Calu3 (cell line): ENCODE measurements at regions of chr14 and their contacts with region 1.

Region 1: GRCh38 chr14:56117765-56118610 is at the start of gene PELI2:
- DNase-seq: peak; percentile 85
- H3K4me3 Mint-ChIP-seq: peak within 1 kb of the TSS; percentile 96
- H3K27ac Mint-ChIP-seq: peak within 1 kb of the TSS; percentile 86
- H3K4me1 Mint-ChIP-seq: peaks cover 42% of the 10 kb centered on the region
- H3K27me3 Mint-ChIP-seq: no peaks in the 10 kb centered on the region
- CTCF ChIP-seq: no peak
- total RNA-seq, gene PELI2: 14.7 and 19.5 TPM in 2 replicates

Region 2: GRCh38 chr14:54301359-54301758 is 1816.6 kb before region 1 on chr14:
- CTCF ChIA-PET with region 1: interaction called, 10 read pairs
- intact Hi-C with region 1: no loop called
- DNase-seq: no peak
- H3K4me3 Mint-ChIP-seq: no peak overlapping the region
- H3K27ac Mint-ChIP-seq: no peak overlapping the region
- H3K4me1 Mint-ChIP-seq: no peaks in the 10 kb centered on the region
- H3K27me3 Mint-ChIP-seq: peaks cover 17% of the 10 kb centered on the region
- CTCF ChIP-seq: no peak

Region 3: GRCh38 chr14:55846826-55847446 is 271.1 kb before region 1 on chr14:
- CTCF ChIA-PET with region 1: no interaction called
- intact Hi-C with region 1: loop called (anchors 10 kb)
- DNase-seq: no peak
- H3K4me3 Mint-ChIP-seq: no peak overlapping the region
- H3K27ac Mint-ChIP-seq: no peak overlapping the region
- H3K4me1 Mint-ChIP-seq: peaks cover 63% of the 10 kb centered on the region
- H3K27me3 Mint-ChIP-seq: no peaks in the 10 kb centered on the region
- CTCF ChIP-seq: no peak

Region 4: GRCh38 chr14:55976219-55976618 is 141.8 kb before region 1 on chr14:
- CTCF ChIA-PET with region 1: no interaction called
- intact Hi-C with region 1: loop called (anchors 2 kb)
- DNase-seq: peak; percentile 57
- H3K4me3 Mint-ChIP-seq: no peak overlapping the region
- H3K27ac Mint-ChIP-seq: peak overlapping the region; percentile 38
- H3K4me1 Mint-ChIP-seq: peaks cover 28% of the 10 kb centered on the region
- H3K27me3 Mint-ChIP-seq: no peaks in the 10 kb centered on the region
- CTCF ChIP-seq: no peak

Region 5: GRCh38 chr14:56189307-56189706 is 71.3 kb after region 1 on chr14:
- CTCF ChIA-PET with region 1: no interaction called
- intact Hi-C with region 1: loop called (anchors 5 kb)
- DNase-seq: no peak
- H3K4me3 Mint-ChIP-seq: no peak overlapping the region
- H3K27ac Mint-ChIP-seq: no peak overlapping the region
- H3K4me1 Mint-ChIP-seq: peaks cover 8% of the 10 kb centered on the region
- H3K27me3 Mint-ChIP-seq: no peaks in the 10 kb centered on the region
- CTCF ChIP-seq: no peak